Right cardiac atrium (tissue), 5 donors: ENCODE measurements at regions of chr5 and their contacts with region 1.

Region 1: GRCh38 chr5:134184155-134185135 is 7.7 kb upstream of the SKP1 start:
- DNase-seq: peak; percentile 58 to 79 (median 77)
- ATAC-seq: peak; percentile 83 to 84
- H3K4me3 ChIP-seq: no peak overlapping the region
- H3K27ac ChIP-seq: no peak overlapping the region
- H3K4me1 ChIP-seq: no peaks in the 10 kb centered on the region
- H3K27me3 ChIP-seq: no peaks in the 10 kb centered on the region

Region 2: GRCh38 chr5:134113902-134114875 is 70.3 kb before region 1 on chr5 and contains the start of gene TCF7:
- intact Hi-C with region 1: no loop called
- DNase-seq: peak; percentile 76 to 89 (median 88)
- ATAC-seq: peak; percentile 95
- H3K4me3 ChIP-seq: peak within 1 kb of the TSS; percentile 87
- H3K27ac ChIP-seq: no peak within 1 kb of the TSS
- H3K4me1 ChIP-seq: peaks cover 5% of the 10 kb centered on the region
- H3K27me3 ChIP-seq: no peaks in the 10 kb centered on the region
- total RNA-seq, gene TCF7: 1.3 to 4.0 (median 3.4) TPM

Region 3: GRCh38 chr5:134289509-134290113 is 105.2 kb after region 1 on chr5:
- intact Hi-C with region 1: loop called (anchors 2 to 5 kb)
- DNase-seq: no peak
- ATAC-seq: peak; percentile 91 to 93
- H3K4me3 ChIP-seq: no peak overlapping the region
- H3K27ac ChIP-seq: no peak overlapping the region
- H3K4me1 ChIP-seq: no peaks in the 10 kb centered on the region
- H3K27me3 ChIP-seq: no peaks in the 10 kb centered on the region

Region 4: DNA sequence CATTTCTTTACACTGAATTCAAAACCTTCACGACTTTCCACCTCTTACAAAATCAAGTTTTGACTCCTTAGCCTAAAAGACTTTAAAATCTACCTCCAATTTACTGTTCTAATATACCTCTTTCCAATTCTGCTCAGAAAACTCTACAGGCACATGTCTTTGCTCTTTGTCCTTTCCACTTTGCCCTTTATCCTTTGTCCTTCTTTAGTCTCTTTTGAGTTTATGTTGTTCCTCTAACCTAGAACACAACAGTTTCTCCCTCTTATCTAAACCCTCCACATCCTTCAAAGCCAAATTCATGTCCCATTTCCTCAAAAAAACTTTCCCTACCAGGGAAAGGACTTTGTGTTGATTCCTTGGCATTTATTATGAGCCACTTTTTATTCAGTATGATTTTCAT is 181.2 kb after region 1 on chr5:
- intact Hi-C with region 1: no loop called
- DNase-seq: no peak
- ATAC-seq: no peak
- H3K4me3 ChIP-seq: no peak overlapping the region
- H3K27ac ChIP-seq: no peak overlapping the region
- H3K4me1 ChIP-seq: peaks cover 3% of the 10 kb centered on the region
- H3K27me3 ChIP-seq: no peaks in the 10 kb centered on the region